Activated T-helper 1 cell treated with anti-CD3 and anti-CD28 coated beads, Interleukin-12 subunit alpha, Interleukin-12 subunit beta, Interleukin-2, Interleukin-4 antibody, amounts not matched to agents 30 ng/mL and 10 ng/mL and 1 ng/mL, durations not matched to agents 14 hours and 24 hours and 36 hours (primary cell): ENCODE measurements at regions of chr11 and their contacts with region 1.

Region 1: GRCh38 chr11:12235947-12236743 is 125.8 kb downstream of the MICAL2 start:
- DNase-seq: peak; percentile 67
- H3K4me3 Mint-ChIP-seq: peak overlapping the region; percentile 77
- H3K27ac Mint-ChIP-seq: peak overlapping the region; percentile 96
- H3K4me1 Mint-ChIP-seq: peaks cover 65% of the 10 kb centered on the region
- H3K27me3 Mint-ChIP-seq: no peaks in the 10 kb centered on the region

Region 2: GRCh38 chr11:12110201-12110713 is 125.9 kb before region 1 on chr11 and contains the start of gene MICAL2:
- intact Hi-C with region 1: loop called (anchors 1 kb)
- DNase-seq: peak; percentile 90
- H3K4me3 Mint-ChIP-seq: peak within 1 kb of the TSS; percentile 90
- H3K27ac Mint-ChIP-seq: peak within 1 kb of the TSS; percentile 99
- H3K4me1 Mint-ChIP-seq: peaks cover 75% of the 10 kb centered on the region
- H3K27me3 Mint-ChIP-seq: no peaks in the 10 kb centered on the region
- total RNA-seq, gene MICAL2: 595 and 619 TPM in 2 replicates

Region 3: GRCh38 chr11:12159351-12160099 is 76.6 kb before region 1 on chr11:
- intact Hi-C with region 1: no loop called
- DNase-seq: no peak
- H3K4me3 Mint-ChIP-seq: no peak overlapping the region
- H3K27ac Mint-ChIP-seq: peak overlapping the region; percentile 88
- H3K4me1 Mint-ChIP-seq: peaks cover 95% of the 10 kb centered on the region
- H3K27me3 Mint-ChIP-seq: no peaks in the 10 kb centered on the region

Region 4: DNA sequence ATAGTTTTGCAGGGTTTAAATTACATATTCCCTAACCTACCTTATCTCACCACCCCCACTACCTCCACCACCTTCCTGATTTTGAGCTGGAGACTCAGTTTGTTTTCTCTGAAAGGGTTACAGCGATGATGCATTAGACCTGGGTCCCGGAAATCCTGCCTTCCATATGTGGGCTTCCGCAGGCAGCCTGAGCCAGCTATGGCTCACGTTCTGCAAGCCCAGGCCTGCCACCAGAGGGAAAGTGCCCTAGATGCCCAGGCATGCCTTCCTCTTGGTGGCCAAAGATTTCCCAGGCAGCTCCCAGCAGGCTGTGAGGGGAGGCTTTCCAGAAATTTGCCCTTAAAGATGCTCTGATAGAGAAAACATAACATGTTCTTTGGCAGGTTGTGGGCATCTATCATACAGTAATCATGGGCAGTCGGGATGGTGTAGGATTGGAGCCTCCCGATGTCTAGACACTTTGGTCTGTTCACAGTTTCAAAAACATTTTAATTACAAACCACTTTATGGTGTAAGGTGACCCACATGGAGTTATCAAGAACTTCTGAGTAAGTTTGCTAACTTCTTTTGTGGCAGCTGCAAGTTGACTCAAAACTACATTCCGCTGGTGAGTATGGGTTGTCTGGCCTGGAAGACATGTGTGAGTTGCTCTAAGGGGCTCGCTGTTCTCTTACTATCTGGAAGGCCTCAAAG is 46.5 kb before region 1 on chr11:
- intact Hi-C with region 1: loop called (anchors 1 kb)
- DNase-seq: no peak
- H3K4me3 Mint-ChIP-seq: peak overlapping the region; percentile 48
- H3K27ac Mint-ChIP-seq: peak overlapping the region; percentile 80
- H3K4me1 Mint-ChIP-seq: peaks cover 82% of the 10 kb centered on the region
- H3K27me3 Mint-ChIP-seq: no peaks in the 10 kb centered on the region

Region 5: GRCh38 chr11:12224537-12224893 is 11.6 kb before region 1 on chr11:
- intact Hi-C with region 1: loop called (anchors 1 kb)
- DNase-seq: peak; percentile 85
- H3K4me3 Mint-ChIP-seq: peak overlapping the region; percentile 68
- H3K27ac Mint-ChIP-seq: peak overlapping the region; percentile 91
- H3K4me1 Mint-ChIP-seq: peaks cover 69% of the 10 kb centered on the region
- H3K27me3 Mint-ChIP-seq: no peaks in the 10 kb centered on the region

Region 6: DNA sequence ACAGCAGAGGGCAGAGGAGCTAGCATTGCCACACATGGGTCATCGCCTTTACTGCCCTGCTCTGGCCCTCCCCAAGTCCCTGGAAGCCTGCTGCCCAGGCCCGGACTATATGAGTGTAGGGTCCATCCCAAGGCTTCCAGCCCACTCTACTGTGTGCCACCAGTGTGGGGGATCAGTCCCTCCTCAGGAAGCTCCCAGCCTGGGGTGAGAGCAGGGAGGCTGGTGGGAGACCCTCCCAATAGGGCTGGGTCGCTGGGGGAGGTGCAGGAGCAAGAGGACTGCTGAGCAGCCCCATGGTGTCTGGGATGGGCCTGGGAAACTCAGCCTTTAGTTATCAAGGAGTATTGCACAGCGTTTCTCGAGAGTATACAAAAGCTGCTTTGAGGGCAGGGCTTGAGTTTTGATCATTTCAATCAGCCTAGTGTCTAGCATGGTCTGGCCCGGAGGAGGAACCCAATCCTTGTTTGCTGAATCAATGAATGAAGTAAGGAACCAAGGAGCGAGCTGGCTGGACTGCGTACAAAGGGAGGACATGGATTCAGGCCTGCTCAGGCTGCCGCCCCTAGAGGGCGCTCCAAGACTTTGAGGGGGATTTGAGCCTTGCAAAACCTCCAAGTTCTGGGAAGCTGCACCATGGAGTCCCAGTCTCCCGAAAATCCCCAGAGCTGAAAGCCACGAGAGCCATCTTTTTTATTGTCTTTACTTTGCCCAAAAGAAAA is 52.2 kb after region 1 on chr11:
- intact Hi-C with region 1: no loop called
- DNase-seq: no peak
- H3K4me3 Mint-ChIP-seq: no peak overlapping the region
- H3K27ac Mint-ChIP-seq: no peak overlapping the region
- H3K4me1 Mint-ChIP-seq: peaks cover 18% of the 10 kb centered on the region
- H3K27me3 Mint-ChIP-seq: no peaks in the 10 kb centered on the region